A673 (cell line): ENCODE measurements at regions of chr19 and their contacts with region 1.

Region 1: DNA sequence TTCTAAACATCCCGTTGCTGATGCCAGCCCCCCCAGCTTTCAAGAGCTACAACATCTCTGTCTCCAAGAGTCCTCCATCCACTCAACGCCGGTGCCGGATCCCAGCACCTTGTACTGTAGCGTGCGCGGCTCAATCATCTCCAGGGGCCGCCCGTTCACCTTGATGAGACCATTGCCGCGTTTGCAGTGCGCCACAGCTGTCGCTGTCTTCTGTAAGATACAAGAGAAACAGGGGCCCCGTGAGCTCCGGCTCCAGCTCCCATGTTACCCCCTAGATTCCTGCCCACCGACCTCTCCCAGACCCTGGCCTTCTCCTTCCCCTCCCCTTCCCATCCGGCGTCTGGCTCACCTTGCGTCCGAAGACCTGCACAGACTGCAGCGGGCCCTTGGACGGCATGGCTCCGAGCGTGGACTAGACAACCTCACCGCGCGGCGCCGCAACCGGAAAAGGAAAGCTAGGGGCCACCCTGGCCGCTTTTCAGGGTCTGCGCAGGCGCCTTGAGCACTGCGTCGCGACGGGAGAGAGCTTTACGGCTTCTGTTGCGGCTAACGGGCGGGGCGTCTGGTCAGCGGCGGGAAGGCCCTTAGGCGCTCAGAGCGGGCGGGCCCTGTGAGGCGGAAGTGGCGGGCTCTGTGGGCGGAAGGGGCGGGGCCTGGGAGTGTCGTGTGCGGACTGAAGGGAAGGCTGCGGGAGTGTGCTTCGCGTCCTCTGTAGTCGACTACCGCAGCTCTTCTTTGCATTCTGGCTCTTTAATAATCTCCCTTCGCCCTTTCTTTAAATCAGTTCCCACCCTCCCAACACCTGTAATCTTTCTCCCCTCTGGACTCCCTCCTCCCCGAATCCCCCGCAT is at the start of gene RPS16:
- DNase-seq: peak; percentile 99
- H3K4me3 ChIP-seq: peak within 1 kb of the TSS; percentile 100
- H3K27ac ChIP-seq: peak within 1 kb of the TSS; percentile 97
- H3K4me1 ChIP-seq: peaks cover 12% of the 10 kb centered on the region
- H3K27me3 ChIP-seq: no peaks in the 10 kb centered on the region
- CTCF ChIP-seq: no peak
- total RNA-seq, gene RPS16: 1,898 and 1,963 TPM in 2 replicates

Region 2: DNA sequence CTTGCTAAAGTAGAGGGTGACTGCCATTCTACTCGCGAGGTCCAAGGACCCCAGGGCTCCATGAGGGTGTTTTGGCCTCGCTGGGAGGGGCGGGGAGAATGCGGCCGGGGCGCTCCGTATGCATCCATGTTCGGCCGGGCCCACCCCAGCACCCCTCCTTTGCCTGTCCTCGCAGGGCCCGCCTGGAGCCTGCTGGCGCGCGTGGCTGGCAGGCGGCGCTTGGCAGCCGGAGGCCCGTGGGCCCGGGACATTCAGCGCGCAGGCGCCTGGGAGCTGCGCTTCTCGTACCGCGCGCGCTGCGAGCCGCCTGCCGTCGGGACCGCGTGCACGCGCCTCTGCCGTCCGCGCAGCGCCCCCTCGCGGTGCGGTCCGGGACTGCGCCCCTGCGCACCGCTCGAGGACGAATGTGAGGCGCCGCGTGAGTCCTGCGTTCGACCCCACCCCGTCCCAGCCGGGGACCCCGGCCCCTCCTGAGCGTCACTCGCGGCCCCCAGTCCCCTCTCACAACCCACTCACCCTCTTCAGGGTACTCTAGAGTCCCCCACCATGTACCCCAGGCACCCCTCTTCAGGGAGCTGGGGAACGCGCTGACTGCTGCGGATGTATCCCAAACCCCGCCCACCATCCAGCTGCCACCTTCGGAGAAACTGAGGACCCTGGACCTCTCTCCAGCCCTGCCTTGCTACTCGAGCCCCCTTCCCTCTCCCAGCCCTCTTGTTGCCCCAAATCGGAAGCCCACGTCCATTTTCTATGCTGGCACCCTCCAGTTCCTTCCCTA is 67.1 kb after region 1 on chr19:
- CTCF ChIA-PET with region 1: interaction called, 6 read pairs
- POLR2A ChIA-PET with region 1: interaction called, 10 read pairs
- intact Hi-C with region 1: no loop called
- DNase-seq: peak; percentile 91
- H3K4me3 ChIP-seq: no peak overlapping the region
- H3K27ac ChIP-seq: no peak overlapping the region
- H3K4me1 ChIP-seq: peaks cover 14% of the 10 kb centered on the region
- H3K27me3 ChIP-seq: peaks cover 26% of the 10 kb centered on the region
- CTCF ChIP-seq: peak; percentile 66